ENCODE measurements at regions of chr13 and their contacts with region 1.

Region 1: GRCh38 chr13:23752111-23753001 is 136.8 kb downstream of the MIPEP start:
- DNase-seq: no peak
- H3K4me3 Mint-ChIP-seq: no peak overlapping the region
- H3K27ac Mint-ChIP-seq: peak overlapping the region; percentile 65
- H3K4me1 Mint-ChIP-seq: peaks cover 41% of the 10 kb centered on the region
- H3K27me3 Mint-ChIP-seq: peaks cover 9% of the 10 kb centered on the region

Region 2: GRCh38 chr13:23579072-23579895 is 173.1 kb before region 1 on chr13:
- intact Hi-C with region 1: loop called (anchors 2 kb)
- DNase-seq: peak; percentile 88
- H3K4me3 Mint-ChIP-seq: peak overlapping the region; percentile 70
- H3K27ac Mint-ChIP-seq: no peak overlapping the region
- H3K4me1 Mint-ChIP-seq: peaks cover 15% of the 10 kb centered on the region
- H3K27me3 Mint-ChIP-seq: peaks cover 66% of the 10 kb centered on the region

Region 3: GRCh38 chr13:23741879-23742510 is 10.4 kb before region 1 on chr13:
- intact Hi-C with region 1: loop called (anchors 1 kb)
- DNase-seq: no peak
- H3K4me3 Mint-ChIP-seq: no peak overlapping the region
- H3K27ac Mint-ChIP-seq: no peak overlapping the region
- H3K4me1 Mint-ChIP-seq: peaks cover 41% of the 10 kb centered on the region
- H3K27me3 Mint-ChIP-seq: peaks cover 17% of the 10 kb centered on the region

Region 4: DNA sequence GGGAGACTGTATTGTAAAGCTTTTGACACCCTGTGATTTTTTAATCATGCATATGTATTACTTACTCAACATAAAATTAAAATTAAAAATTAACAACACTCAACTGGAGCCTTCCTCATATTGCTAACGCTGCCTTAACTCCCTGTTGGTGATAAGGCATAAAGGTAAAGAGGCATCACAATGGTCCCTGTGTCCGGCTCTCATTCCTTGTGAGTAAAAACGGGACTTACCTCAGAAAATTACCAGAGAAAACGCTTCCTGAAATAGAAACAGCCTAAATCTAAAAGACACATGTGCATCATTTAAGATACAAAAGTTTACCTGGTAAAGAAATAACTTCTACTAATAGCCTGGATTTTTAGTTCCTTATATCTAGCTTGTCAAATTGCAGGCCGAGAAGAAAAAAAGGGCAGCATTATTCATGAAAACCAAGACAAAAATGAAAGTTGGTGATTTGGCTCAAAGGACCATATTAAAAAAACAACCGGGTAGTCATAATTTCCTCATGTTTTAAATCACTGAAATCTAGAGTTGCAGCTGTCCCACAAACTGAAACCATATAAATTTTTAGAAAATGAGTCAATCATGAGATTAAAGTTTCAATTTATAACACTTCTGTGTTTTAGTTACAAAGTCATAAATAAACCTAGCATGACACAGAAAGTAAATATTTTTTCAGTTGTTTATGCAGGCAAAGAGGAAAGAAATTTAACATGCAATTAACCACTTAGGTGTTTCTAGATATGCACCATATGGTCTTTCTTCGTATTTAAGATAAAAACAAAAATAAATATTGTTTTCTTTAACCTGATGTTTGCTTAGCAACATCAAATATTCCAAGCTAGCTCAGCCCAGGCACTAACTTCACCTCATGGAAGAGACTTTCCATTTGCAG is 42.2 kb after region 1 on chr13:
- intact Hi-C with region 1: loop called (anchors 1 kb)
- DNase-seq: no peak
- H3K4me3 Mint-ChIP-seq: no peak overlapping the region
- H3K27ac Mint-ChIP-seq: no peak overlapping the region
- H3K4me1 Mint-ChIP-seq: peaks cover 12% of the 10 kb centered on the region
- H3K27me3 Mint-ChIP-seq: peaks cover 2% of the 10 kb centered on the region

Region 5: DNA sequence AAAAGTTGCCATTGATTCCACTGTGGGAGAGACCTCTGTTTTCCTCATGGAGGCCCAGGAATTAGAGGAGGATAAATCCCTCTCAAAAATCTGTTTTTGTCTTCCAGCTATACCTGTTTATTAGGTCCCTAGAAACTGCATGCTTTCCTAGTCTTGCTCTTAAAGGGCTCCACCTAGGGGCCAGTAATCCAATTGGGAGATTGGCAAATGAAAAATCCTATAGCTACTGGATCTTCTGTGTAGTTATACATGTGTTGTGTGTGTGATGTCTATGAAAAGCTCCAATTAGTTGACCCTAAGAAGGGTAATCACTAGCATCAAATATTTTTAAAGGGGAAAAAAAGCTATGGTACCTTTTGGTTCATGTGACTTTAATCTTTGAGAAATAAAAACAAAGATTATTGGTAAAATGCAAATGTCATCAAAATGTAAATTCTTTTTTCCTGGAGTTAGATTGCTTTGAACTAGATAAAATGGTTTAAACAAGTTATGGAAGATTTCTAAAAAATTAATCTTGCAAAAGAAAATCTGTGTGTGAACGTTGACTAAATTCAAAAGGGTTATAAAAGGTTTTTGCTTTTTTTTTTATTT is 208.3 kb after region 1 on chr13:
- intact Hi-C with region 1: loop called (anchors 10 kb)
- DNase-seq: no peak
- H3K4me3 Mint-ChIP-seq: no peak overlapping the region
- H3K27ac Mint-ChIP-seq: no peak overlapping the region
- H3K4me1 Mint-ChIP-seq: peaks cover 31% of the 10 kb centered on the region
- H3K27me3 Mint-ChIP-seq: peaks cover 2% of the 10 kb centered on the region

Region 6: DNA sequence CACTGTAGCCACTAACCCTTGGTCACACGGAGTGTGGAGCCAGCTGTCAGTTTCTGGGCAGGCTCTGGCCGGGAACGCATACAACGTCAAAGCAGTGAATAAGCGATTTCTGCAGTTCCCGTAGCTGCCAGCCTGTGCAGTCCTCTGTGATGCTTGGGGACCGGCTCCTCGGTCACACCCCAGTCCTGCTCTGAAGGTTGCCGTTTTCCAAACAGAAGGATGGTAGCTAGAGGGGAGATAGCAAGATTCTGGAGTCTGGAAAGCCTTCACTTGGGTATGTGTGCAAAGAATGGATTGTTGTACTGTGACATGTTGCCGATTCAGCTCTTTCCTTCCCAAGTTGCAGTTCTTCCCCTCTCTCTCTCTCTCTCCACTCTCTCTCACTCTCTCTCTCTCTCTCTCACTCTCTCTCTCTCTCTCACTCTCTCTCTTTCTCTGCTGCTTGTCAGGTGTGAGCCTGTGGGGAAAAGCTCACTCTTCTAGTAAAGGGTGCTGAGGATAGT is 518.3 kb after region 1 on chr13:
- intact Hi-C with region 1: loop called (anchors 10 kb)
- DNase-seq: peak; percentile 61
- H3K4me3 Mint-ChIP-seq: peak overlapping the region; percentile 97
- H3K27ac Mint-ChIP-seq: peak overlapping the region; percentile 95
- H3K4me1 Mint-ChIP-seq: peaks cover 81% of the 10 kb centered on the region
- H3K27me3 Mint-ChIP-seq: no peaks in the 10 kb centered on the region